Activated CD8-positive, alpha-beta T cell treated with anti-CD3 and anti-CD28 coated beads, Interleukin-2, amount 10 ng/mL, durations not matched to agents 7 days and 5 days (primary cell): ENCODE measurements at regions of chr14 and their contacts with region 1.

Region 1: DNA sequence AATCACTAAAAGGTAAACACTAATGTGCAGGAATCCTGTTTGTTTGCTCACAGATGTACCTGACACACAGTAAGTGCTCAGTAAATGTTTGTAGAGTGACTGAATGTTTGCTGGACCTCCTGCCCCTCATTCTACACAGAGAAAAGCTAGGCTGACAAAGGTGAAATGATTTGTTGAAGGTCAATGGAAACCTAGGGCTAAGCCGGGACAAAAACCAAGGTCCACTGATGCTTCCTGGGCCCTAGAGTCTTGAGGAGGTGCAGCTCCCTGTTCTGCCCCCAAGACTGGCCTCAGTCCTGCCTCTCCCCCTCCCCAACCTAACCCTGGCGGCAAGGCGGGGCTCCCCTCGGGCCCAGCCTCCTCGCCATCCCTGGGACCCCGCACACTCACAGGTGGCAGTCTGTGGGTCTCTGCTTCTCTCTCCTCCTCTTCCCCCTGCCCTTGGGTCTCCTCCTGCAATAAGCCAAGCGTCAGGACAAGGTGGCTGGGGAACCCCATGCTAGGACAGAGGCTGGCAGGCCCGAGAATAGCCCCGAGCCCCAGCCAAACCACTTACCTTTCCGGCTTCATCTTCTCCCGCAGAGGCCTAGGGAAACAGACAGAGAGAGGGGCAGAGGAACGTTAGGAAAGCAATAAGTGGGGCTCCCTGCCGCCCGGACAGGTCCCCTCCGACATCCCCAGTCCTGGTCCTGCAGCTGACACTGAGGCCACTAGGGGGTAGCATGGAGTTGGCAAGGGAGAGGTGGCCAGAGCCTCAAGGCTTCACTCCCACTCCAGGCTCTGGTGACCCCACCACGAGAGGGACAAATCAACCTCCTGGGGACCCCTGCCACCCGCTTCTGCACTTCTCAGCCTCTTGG is 9.3 kb downstream of the PGF start:
- DNase-seq: peak; percentile 86
- ATAC-seq: peak; percentile 75
- H3K4me3 Mint-ChIP-seq: no peak overlapping the region
- H3K27ac Mint-ChIP-seq: peak overlapping the region; percentile 68
- H3K4me1 Mint-ChIP-seq: peaks cover 31% of the 10 kb centered on the region
- H3K27me3 Mint-ChIP-seq: no peaks in the 10 kb centered on the region

Region 2: DNA sequence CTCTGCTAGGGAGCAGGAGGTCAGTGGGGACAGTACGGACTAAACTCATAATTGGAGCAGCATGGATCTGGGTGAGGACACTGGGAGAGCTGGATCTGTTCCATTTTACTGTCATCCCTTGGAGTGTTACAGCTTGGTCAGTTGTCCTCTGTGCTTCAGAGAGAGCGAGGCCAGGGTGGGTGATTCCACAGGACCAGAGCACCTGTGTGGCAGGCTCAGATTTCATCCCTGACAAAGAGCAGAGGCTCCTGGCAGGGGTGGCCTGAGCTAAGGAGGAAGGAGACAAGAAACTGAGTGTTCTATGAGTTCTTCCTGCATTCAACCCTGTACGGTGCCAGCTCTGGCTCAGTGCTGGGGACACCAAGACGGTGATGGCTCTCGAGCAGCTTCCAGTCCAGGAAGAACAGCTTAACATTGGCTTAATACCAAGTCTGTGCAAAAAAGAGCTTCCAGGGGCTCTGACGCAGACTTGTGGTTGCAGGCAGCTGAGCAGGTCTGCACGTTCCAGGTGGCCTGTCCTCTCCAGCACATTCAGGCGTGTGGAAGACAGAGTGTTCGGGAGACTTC is 17.7 kb after region 1 on chr14:
- CTCF ChIA-PET with region 1: interaction called, 12 read pairs
- POLR2A ChIA-PET with region 1: no interaction called
- DNase-seq: no peak
- ATAC-seq: peak; percentile 36
- H3K4me3 Mint-ChIP-seq: no peak overlapping the region
- H3K27ac Mint-ChIP-seq: no peak overlapping the region
- H3K4me1 Mint-ChIP-seq: peaks cover 20% of the 10 kb centered on the region
- H3K27me3 Mint-ChIP-seq: peaks cover 16% of the 10 kb centered on the region